CD8-positive, alpha-beta T cell (primary cell): ENCODE measurements at regions of chr3 and their contacts with region 1.

Region 1: GRCh38 chr3:9932843-9933560 is 632 bp upstream of the CRELD1 start:
- DNase-seq: peak; percentile 77 to 94 (median 87)
- ATAC-seq: peak; percentile 59
- H3K4me3 ChIP-seq: peak overlapping the region; percentile 85 to 95
- H3K4me3 Mint-ChIP-seq: peak overlapping the region; percentile 95
- H3K27ac ChIP-seq: peak overlapping the region; percentile 90 to 100
- H3K27ac Mint-ChIP-seq: peak overlapping the region; percentile 99
- H3K4me1 ChIP-seq: peaks cover 32% of the 10 kb centered on the region
- H3K4me1 Mint-ChIP-seq: peaks cover 47% of the 10 kb centered on the region
- H3K27me3 ChIP-seq: no peaks in the 10 kb centered on the region
- H3K27me3 Mint-ChIP-seq: no peaks in the 10 kb centered on the region
- CTCF ChIP-seq: peak; percentile 79

Region 2: GRCh38 chr3:9396700-9397521 is 536.1 kb before region 1 on chr3:
- CTCF ChIA-PET with region 1: no interaction called
- POLR2A ChIA-PET with region 1: interaction called, 10 read pairs
- intact Hi-C with region 1: loop called in 1 of 2 experiments (anchors 1 kb)
- DNase-seq: peak; percentile 98 to 100 (median 99)
- ATAC-seq: peak; percentile 67
- H3K4me3 ChIP-seq: peak overlapping the region; percentile 68 to 73
- H3K4me3 Mint-ChIP-seq: peak overlapping the region; percentile 94
- H3K27ac ChIP-seq: peak overlapping the region; percentile 90 to 97
- H3K27ac Mint-ChIP-seq: peak overlapping the region; percentile 97
- H3K4me1 ChIP-seq: peaks cover 69% of the 10 kb centered on the region
- H3K4me1 Mint-ChIP-seq: peaks cover 72% of the 10 kb centered on the region
- H3K27me3 ChIP-seq: no peaks in the 10 kb centered on the region
- H3K27me3 Mint-ChIP-seq: no peaks in the 10 kb centered on the region
- CTCF ChIP-seq: no peak

Region 3: GRCh38 chr3:9792405-9793160 is 140.4 kb before region 1 on chr3 and contains the starts of genes ARPC4 and TADA3:
- CTCF ChIA-PET with region 1: interaction called, 3 read pairs
- POLR2A ChIA-PET with region 1: interaction called, 11 read pairs
- intact Hi-C with region 1: loop called (anchors 1 kb)
- DNase-seq: peak; percentile 82 to 97 (median 92)
- ATAC-seq: peak; percentile 83
- H3K4me3 ChIP-seq: peak within 1 kb of the TSS; percentile 76 to 96
- H3K4me3 Mint-ChIP-seq: peak within 1 kb of the TSS; percentile 94
- H3K27ac ChIP-seq: peak within 1 kb of the TSS; percentile 93 to 98
- H3K27ac Mint-ChIP-seq: peak within 1 kb of the TSS; percentile 98
- H3K4me1 ChIP-seq: peaks cover 48% of the 10 kb centered on the region
- H3K4me1 Mint-ChIP-seq: peaks cover 58% of the 10 kb centered on the region
- H3K27me3 ChIP-seq: no peaks in the 10 kb centered on the region
- H3K27me3 Mint-ChIP-seq: no peaks in the 10 kb centered on the region
- CTCF ChIP-seq: no peak
- total RNA-seq, gene ARPC4: 97.7 to 104 TPM
- total RNA-seq, gene TADA3: 9.5 to 11.0 TPM

Region 4: DNA sequence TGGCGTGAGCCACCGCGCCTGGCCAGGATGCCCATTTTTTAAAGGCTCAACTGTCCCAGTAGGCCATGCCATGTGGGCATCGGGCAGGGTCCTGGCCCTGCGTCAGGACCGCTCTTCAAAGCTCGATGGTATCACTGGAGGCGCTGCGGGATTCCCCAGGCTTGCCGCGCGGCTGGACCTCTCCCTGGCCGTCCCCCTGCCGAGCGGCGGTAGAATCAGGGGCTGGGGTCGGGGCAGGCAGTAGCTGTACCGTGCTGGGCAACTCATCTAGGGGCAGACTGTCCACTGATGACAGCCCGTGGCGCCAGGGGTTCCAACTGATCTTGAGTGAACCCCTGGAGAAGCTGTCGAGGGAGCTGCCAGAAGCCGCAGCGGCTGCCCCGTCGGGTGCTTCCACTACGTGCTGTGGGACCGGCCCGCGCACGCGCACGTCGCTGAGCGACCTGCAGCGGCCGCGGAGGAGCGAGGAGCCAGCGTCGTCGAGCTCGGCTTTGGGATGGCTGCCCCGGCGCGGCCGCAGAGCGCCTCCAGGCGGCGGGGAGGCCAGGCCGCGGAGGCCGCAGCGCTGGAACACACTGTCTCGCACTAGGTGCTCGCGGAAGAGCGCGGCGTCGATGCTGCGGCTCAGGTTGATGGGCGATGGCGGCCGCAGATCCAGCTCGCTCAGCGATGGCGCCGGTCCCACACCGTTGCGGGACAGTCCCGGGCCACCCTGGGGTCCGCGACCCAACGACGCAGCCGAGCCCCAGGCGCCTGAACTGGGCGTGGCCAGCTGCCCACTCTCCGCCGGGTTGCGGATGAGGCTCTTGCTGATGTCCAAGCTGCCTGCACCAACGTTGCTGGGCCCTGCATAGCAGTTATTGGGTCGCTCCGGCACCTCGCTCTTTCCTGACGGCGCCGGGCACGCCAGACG is 13.4 kb after region 1 on chr3:
- CTCF ChIA-PET with region 1: interaction called, 22 read pairs
- POLR2A ChIA-PET with region 1: interaction called, 46 read pairs
- intact Hi-C with region 1: loop called (anchors 1 kb)
- DNase-seq: peak; percentile 63 to 91 (median 84)
- ATAC-seq: peak; percentile 94
- H3K4me3 ChIP-seq: peak overlapping the region; percentile 49 to 54
- H3K4me3 Mint-ChIP-seq: peak overlapping the region; percentile 75
- H3K27ac ChIP-seq: peak overlapping the region in 1 of 2 experiments; percentile 63
- H3K27ac Mint-ChIP-seq: peak overlapping the region; percentile 77
- H3K4me1 ChIP-seq: peaks cover 12% of the 10 kb centered on the region
- H3K4me1 Mint-ChIP-seq: peaks cover 13% of the 10 kb centered on the region
- H3K27me3 ChIP-seq: no peaks in the 10 kb centered on the region
- H3K27me3 Mint-ChIP-seq: no peaks in the 10 kb centered on the region
- CTCF ChIP-seq: peak; percentile 36

Region 5: DNA sequence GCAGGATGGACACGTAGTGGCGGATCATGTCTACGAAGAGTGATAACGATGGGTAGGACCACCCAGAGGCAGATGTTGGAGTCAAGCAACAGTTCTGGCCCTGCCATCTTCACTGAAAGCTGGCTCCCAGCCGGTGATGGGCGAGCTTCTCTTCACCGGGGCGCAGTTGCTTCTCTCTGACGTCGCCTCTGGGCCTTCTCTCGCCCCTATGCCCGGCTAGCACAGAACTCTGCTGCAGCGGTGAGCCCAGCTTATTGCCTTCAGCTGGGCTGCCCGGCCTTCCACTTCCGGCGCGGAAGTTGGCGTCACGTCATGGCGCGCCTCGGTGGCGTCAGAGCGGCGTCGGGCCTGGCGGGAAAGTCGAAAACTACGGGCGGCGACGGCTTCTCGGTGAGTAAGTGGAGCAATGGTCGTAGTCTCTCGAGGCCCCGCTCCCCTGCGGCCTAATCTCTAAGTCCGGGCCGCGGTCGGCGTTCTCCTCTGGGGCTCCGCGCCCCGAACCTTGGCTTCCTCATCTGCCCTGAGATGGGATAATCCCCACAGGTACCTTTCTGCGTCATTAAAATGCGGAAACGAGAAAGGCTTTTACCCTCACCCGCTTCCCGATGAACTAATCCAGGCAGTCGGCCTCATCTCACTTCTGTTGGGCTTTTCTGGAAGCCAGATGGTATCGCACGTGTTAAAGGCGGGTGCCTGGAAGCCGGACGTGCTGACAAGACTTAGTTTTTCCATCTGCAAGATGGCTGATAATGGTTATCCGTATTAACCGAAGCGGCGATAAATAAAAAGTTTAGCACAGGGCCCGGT is 93.3 kb after region 1 on chr3 and contains the start of gene FANCD2:
- CTCF ChIA-PET with region 1: no interaction called
- POLR2A ChIA-PET with region 1: interaction called, 6 read pairs
- intact Hi-C with region 1: loop called (anchors 1 kb)
- DNase-seq: peak; percentile 87 to 97 (median 93)
- ATAC-seq: peak; percentile 92
- H3K4me3 ChIP-seq: peak within 1 kb of the TSS; percentile 76 to 82
- H3K4me3 Mint-ChIP-seq: peak within 1 kb of the TSS; percentile 98
- H3K27ac ChIP-seq: peak within 1 kb of the TSS; percentile 84
- H3K27ac Mint-ChIP-seq: peak within 1 kb of the TSS; percentile 96
- H3K4me1 ChIP-seq: peaks cover 18% of the 10 kb centered on the region
- H3K4me1 Mint-ChIP-seq: peaks cover 27% of the 10 kb centered on the region
- H3K27me3 ChIP-seq: no peaks in the 10 kb centered on the region
- H3K27me3 Mint-ChIP-seq: no peaks in the 10 kb centered on the region
- CTCF ChIP-seq: no peak
- total RNA-seq, gene FANCD2: 15.8 to 17.7 TPM

Region 6: DNA sequence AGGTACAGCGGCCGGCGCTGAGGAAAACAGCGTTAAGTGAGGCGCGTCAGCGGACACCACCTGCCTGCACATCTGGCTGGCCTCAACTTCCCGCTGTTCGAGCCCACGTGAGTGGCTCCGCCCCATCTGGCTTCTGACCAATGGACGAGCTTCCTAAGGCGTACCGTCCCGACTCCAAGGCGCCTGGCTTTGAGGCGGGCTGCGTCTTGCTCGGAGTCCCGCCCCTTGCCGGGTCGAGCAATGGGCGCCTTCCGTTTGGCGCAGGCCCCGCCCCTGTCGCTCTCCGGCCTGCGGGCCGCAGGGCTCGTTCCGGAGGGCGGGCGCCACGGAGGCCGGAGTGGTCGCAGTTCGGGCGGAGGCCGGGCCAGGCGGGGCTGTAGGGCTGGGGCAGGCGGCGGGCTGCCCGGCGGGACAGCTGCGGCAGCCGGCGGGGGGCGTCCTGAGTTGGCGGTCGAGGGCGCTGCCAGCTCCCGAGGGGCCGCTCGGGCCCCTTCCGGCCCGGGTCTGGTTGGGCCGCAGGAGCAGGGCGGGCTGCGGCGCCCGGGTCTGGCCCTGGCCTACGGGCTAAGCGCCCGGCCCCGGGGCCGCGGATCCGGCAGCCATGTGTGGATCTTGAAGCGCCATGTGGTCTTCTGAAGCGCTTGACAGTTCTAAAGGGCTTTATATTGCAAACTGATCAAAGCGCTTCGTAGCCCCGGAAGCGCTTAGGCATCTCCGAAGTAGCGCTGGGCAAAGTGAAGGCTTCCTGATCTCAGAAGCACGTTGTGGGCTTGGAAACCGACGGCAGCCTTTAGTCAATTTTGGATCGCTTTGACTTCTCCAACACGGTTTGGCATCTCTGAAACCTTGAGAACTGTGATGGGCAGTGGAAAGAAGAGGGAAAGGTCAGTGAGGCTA is 315.4 kb after region 1 on chr3 and contains the start of gene TATDN2:
- CTCF ChIA-PET with region 1: no interaction called
- POLR2A ChIA-PET with region 1: interaction called, 9 read pairs
- intact Hi-C with region 1: loop called (anchors 1 to 5 kb)
- DNase-seq: peak; percentile 75 to 98 (median 91)
- ATAC-seq: peak; percentile 92
- H3K4me3 ChIP-seq: peak within 1 kb of the TSS; percentile 86 to 92
- H3K4me3 Mint-ChIP-seq: peak within 1 kb of the TSS; percentile 97
- H3K27ac ChIP-seq: peak within 1 kb of the TSS; percentile 64 to 76
- H3K27ac Mint-ChIP-seq: peak within 1 kb of the TSS; percentile 93
- H3K4me1 ChIP-seq: peaks cover 32% of the 10 kb centered on the region
- H3K4me1 Mint-ChIP-seq: peaks cover 52% of the 10 kb centered on the region
- H3K27me3 ChIP-seq: no peaks in the 10 kb centered on the region
- H3K27me3 Mint-ChIP-seq: no peaks in the 10 kb centered on the region
- CTCF ChIP-seq: no peak
- total RNA-seq, gene TATDN2: 40.2 to 40.3 TPM

Region 7: GRCh38 chr3:11719406-11720230 is 1786.6 kb after region 1 on chr3:
- CTCF ChIA-PET with region 1: no interaction called
- POLR2A ChIA-PET with region 1: no interaction called
- intact Hi-C with region 1: loop called in 1 of 2 experiments (anchors 5 kb)
- DNase-seq: peak; percentile 54 to 86 (median 79)
- ATAC-seq: peak; percentile 81
- H3K4me3 ChIP-seq: peak overlapping the region; percentile 68 to 73
- H3K4me3 Mint-ChIP-seq: peak overlapping the region; percentile 88
- H3K27ac ChIP-seq: peak overlapping the region in 1 of 2 experiments; percentile 56
- H3K27ac Mint-ChIP-seq: no peak overlapping the region
- H3K4me1 ChIP-seq: peaks cover 15% of the 10 kb centered on the region
- H3K4me1 Mint-ChIP-seq: peaks cover 24% of the 10 kb centered on the region
- H3K27me3 ChIP-seq: no peaks in the 10 kb centered on the region
- H3K27me3 Mint-ChIP-seq: peaks cover 8% of the 10 kb centered on the region
- CTCF ChIP-seq: no peak